AG04450 (cell line): ENCODE measurements at regions of chr4 and their contacts with region 1.

Region 1: DNA sequence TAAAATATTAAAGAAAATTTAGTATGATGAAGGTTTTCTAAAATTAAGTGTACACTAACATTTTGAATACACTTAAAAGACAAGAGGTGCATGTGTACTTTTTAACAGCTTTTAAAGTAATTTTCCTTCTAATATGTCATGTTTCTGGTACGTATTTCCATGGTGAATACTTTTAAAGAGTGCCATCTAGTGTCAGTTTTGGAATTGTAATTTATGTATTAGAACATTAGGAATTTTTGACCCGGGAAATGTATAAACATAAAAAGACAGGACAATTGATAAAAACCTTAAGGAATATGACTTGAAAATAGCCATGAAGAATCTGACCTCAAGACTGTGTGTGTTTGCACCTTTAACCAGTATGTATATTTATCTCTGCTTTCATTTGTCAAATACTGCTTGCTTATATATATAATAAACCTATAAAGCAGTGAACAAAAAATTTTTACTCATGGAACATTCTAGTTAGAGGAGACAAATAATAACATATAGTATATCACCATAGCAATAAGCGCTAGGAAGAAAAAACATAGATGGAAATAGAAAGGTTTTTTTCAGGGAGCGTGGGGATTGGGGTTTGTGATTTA is 7.2 kb downstream of the GSTCD start:
- DNase-seq: no peak
- H3K4me3 ChIP-seq: no peak overlapping the region
- H3K27ac ChIP-seq: no peak overlapping the region
- H3K27me3 ChIP-seq: no peaks in the 10 kb centered on the region
- CTCF ChIP-seq: peak; percentile 47

Region 2: GRCh38 chr4:105350859-105351490 is 364.8 kb before region 1 on chr4:
- CTCF ChIA-PET with region 1: no interaction called
- POLR2A ChIA-PET with region 1: no interaction called
- DNase-seq: peak; percentile 44
- H3K4me3 ChIP-seq: no peak overlapping the region
- H3K27ac ChIP-seq: no peak overlapping the region
- H3K27me3 ChIP-seq: no peaks in the 10 kb centered on the region
- CTCF ChIP-seq: no peak

Region 3: DNA sequence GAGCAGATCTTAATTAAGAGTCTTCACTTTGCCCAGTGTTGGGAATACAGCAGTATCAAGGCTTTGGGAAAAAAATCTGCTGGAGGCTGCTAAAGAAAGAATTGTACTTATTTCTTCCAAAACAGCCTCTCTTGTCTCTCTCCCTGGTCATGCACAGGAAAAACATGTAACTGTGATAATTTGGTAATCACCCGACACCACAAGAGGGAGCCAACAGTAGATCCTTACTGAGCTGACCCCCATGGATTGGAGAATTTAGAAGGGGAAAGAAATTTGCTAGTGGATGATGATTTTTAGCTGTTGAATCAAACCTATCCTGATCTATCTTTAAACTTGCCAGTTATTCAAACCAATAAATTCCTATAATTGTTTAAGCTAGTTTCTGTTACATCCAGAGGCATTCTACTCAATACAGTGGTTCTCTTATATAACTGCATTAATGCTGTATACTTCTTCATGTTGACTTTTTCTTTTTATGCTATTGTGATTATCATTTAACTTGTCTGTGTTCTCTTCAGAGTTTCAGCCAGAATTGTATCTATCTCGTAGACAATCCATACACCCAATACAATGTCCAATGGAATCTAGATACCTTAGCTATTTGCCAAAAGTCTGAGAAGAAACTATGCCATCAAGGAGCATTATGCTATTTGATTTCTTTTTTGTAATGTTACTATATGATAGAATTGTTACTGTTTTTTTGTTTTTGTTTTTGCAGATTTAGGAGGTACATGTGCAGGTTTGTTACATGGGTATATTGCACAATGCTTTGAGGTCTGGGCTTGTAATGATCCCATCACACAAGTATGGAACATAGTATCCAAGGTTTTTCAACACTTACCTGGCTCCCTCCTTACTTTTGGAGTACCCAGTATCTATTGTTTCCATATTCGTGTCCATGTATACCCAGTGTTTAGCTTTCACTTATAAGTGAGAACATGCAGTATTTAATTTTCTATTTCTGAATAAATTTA is 194.7 kb before region 1 on chr4:
- CTCF ChIA-PET with region 1: interaction called, 10 read pairs
- POLR2A ChIA-PET with region 1: no interaction called
- DNase-seq: peak; percentile 11
- H3K4me3 ChIP-seq: no peak overlapping the region
- H3K27ac ChIP-seq: no peak overlapping the region
- H3K27me3 ChIP-seq: no peaks in the 10 kb centered on the region
- CTCF ChIP-seq: peak; percentile 71